Transverse colon (tissue), 4 donors: ENCODE measurements at regions of chr1 and their contacts with region 1.

Region 1: GRCh38 chr1:231139659-231140654 is 21.9 kb upstream of the TRIM67 start:
- DNase-seq: no peak
- H3K4me3 ChIP-seq: no peak overlapping the region
- H3K27ac ChIP-seq: no peak overlapping the region
- H3K4me1 ChIP-seq: no peaks in the 10 kb centered on the region
- H3K27me3 ChIP-seq: peaks cover 13% of the 10 kb centered on the region
- CTCF ChIP-seq: no peak
- EP300 ChIP-seq: no peak
- POLR2A ChIP-seq: no peak

Region 2: GRCh38 chr1:231124746-231125145 is 15.2 kb before region 1 on chr1:
- in situ Hi-C with region 1: no loop called
- intact Hi-C with region 1: loop called (anchors 1 kb)
- DNase-seq: no peak
- H3K4me3 ChIP-seq: no peak overlapping the region
- H3K27ac ChIP-seq: no peak overlapping the region
- H3K4me1 ChIP-seq: no peaks in the 10 kb centered on the region
- H3K27me3 ChIP-seq: no peaks in the 10 kb centered on the region
- CTCF ChIP-seq: no peak
- EP300 ChIP-seq: no peak
- POLR2A ChIP-seq: no peak

Region 3: DNA sequence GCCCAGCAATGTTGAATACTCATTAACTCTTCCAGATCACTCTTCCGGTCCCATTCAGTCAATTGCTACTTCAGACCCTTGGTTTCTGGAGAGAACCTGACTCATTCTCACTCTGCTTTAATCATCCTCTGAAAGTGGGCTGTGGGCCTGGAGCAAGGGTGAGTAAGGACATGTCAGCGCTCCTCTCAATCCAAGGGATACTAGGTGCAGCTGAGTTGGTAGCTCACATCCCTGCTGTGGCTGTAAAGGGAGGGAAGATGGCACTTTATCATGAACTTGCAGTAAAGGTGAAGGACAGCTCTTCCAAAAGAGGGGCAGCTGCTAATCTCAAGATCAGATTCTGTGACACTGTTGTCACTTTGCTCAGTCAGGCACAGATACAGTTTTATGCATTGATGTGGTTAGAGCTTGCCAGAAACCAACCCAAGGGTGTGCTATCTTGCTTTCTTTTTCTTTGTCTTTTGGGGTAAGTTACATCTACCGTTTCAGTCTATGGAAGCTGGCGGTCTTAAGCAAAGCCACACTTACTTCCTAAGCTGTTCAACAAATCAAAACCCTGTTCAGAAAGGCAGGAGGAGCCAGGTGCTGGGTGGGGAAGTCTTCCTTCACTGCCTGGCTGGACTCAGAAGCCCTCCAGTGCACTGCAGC is 1783.9 kb after region 1 on chr1:
- in situ Hi-C with region 1: no loop called
- intact Hi-C with region 1: loop called (anchors 5 kb)
- DNase-seq: no peak
- H3K4me3 ChIP-seq: no peak overlapping the region
- H3K27ac ChIP-seq: no peak overlapping the region
- H3K4me1 ChIP-seq: no peaks in the 10 kb centered on the region
- H3K27me3 ChIP-seq: no peaks in the 10 kb centered on the region
- CTCF ChIP-seq: no peak
- EP300 ChIP-seq: no peak
- POLR2A ChIP-seq: no peak